PC-9 (cell line): ENCODE measurements at regions of chr3 and their contacts with region 1.

Region 1: GRCh38 chr3:195106418-195106906 is 164.5 kb downstream of the XXYLT1 start:
- DNase-seq: peak in 1 of 2 experiments; percentile 72
- H3K4me3 ChIP-seq: no peak overlapping the region; the same call in 1 of the 2 replicates
- H3K27ac ChIP-seq: no peak overlapping the region
- H3K4me1 ChIP-seq: peaks cover 40% of the 10 kb centered on the region
- H3K27me3 ChIP-seq: no peaks in the 10 kb centered on the region
- CTCF ChIP-seq: peak; percentile 100

Region 2: DNA sequence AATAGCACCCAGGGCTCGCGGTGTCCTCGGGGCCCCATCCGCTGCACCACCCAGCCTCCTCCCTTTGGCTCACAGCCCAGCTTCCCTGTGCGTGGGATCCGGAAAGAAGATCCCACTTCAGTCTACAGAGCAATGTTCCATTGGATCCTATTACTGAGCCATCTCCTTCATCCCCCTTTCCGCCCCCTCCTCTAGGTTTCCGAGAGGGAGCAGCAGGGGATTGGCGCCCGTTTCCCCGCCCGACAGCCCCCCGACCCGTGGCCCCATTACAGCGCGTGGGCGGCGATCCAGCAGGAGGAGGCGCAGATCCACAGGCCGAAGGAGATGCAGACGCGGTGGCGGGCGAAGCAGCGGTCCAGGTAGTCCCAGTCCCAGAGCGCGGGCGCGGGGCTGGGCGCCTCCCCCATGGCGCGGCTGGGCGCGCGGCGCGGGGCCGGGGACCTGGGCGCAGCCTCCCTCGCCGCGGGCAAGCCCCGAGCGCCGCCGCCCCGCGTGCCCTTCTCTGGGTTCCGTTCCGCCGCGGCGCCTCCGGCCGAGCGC is 473.6 kb before region 1 on chr3:
- CTCF ChIA-PET with region 1: no interaction called
- POLR2A ChIA-PET with region 1: no interaction called
- intact Hi-C with region 1: no loop called
- DNase-seq: no peak
- H3K4me3 ChIP-seq: peak overlapping the region; percentile 74
- H3K27ac ChIP-seq: no peak overlapping the region
- H3K4me1 ChIP-seq: no peaks in the 10 kb centered on the region
- H3K27me3 ChIP-seq: no peaks in the 10 kb centered on the region
- CTCF ChIP-seq: no peak

Region 3: DNA sequence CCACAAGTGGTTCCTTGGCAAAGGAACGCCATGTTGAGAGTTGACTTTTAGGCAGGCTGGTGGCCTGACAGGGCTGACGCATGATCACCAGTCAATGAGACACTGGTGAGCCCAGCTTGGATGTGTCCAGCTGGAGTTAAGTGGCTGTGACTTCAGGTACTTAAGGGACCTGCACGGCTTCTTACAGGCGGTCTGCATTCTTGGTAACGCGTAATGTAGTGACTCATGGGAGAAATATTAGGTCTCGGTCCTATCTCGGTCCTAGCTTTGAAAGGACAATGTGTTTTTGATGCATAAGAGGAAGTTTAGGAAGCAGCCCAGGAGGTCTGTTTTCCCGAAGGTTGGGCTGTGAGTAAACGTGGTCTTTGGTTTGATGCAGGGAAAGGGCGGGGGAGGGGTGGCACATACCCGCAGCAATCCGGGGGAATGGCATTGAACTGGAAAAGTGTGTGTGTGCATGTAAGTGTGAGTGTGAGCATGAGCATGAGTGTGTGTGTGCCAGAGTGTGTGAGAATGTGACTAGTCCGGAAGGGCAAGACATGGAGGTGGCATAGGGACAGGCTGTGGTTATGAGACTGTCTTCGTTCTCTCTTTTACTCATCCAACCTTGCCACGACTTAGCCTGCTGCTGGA is 365.5 kb before region 1 on chr3:
- CTCF ChIA-PET with region 1: no interaction called
- POLR2A ChIA-PET with region 1: no interaction called
- intact Hi-C with region 1: loop called (anchors 1 kb)
- DNase-seq: peak; percentile 86 to 100
- H3K4me3 ChIP-seq: peak overlapping the region; percentile 30; the same call in 1 of the 2 replicates
- H3K27ac ChIP-seq: peak overlapping the region; percentile 80
- H3K4me1 ChIP-seq: peaks cover 42% of the 10 kb centered on the region
- H3K27me3 ChIP-seq: no peaks in the 10 kb centered on the region
- CTCF ChIP-seq: no peak

Region 4: GRCh38 chr3:194908972-194909371 is 197.5 kb before region 1 on chr3:
- CTCF ChIA-PET with region 1: interaction called, 20 read pairs
- POLR2A ChIA-PET with region 1: no interaction called
- intact Hi-C with region 1: no loop called
- DNase-seq: no peak
- H3K4me3 ChIP-seq: no peak overlapping the region
- H3K27ac ChIP-seq: no peak overlapping the region
- H3K4me1 ChIP-seq: peaks cover 15% of the 10 kb centered on the region
- H3K27me3 ChIP-seq: peaks cover 4% of the 10 kb centered on the region; the same call in 1 of the 2 replicates
- CTCF ChIP-seq: no peak

Region 5: DNA sequence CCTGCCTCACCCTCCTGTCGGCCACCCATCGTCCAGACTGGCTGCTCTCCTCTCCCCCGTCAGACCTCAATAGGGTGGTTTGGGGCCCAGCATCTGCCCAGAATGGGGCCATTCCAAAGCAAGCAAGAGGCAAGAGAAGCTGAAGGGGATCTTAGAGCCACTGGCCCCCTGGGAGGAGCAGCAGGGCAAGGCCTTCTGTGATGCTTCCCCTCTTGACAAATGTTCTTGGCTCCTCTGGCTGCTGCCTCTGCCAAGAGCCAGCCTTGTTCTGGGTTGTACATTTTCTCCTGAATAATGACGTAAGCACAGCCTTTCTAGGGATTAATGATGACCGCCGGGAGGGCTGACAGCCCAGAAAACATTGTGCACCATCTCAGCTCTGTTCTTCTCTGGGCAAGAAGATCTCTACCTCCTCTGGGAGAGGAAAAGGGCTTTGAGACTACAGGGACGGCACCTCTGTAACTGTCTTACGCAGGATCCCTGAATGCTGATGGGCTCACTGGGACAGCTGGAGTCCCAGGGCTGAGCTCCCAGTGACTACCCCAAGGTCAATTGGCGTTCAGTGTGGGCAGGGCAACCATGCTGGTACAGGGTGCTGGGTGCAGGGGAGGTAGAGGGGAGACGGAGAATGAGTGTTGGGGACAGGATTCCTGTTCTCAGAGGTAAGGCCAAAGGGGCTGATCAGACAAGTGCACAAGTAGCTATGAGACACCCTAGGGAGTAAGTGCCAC is 167.5 kb before region 1 on chr3:
- CTCF ChIA-PET with region 1: interaction called, 10 read pairs
- POLR2A ChIA-PET with region 1: no interaction called
- intact Hi-C with region 1: loop called (anchors 10 kb)
- DNase-seq: no peak
- H3K4me3 ChIP-seq: no peak overlapping the region
- H3K27ac ChIP-seq: no peak overlapping the region
- H3K4me1 ChIP-seq: peaks cover 12% of the 10 kb centered on the region
- H3K27me3 ChIP-seq: no peaks in the 10 kb centered on the region
- CTCF ChIP-seq: no peak

Region 6: GRCh38 chr3:195001961-195002861 is 104.3 kb before region 1 on chr3:
- CTCF ChIA-PET with region 1: no interaction called
- POLR2A ChIA-PET with region 1: no interaction called
- intact Hi-C with region 1: loop called (anchors 1 kb)
- DNase-seq: peak; percentile 90 to 92
- H3K4me3 ChIP-seq: no peak overlapping the region
- H3K27ac ChIP-seq: no peak overlapping the region
- H3K4me1 ChIP-seq: peaks cover 25% of the 10 kb centered on the region
- H3K27me3 ChIP-seq: no peaks in the 10 kb centered on the region
- CTCF ChIP-seq: peak; percentile 85

Region 7: GRCh38 chr3:195259475-195260279 is 153.2 kb after region 1 on chr3:
- CTCF ChIA-PET with region 1: no interaction called
- POLR2A ChIA-PET with region 1: no interaction called
- intact Hi-C with region 1: loop called (anchors 1 kb)
- DNase-seq: peak; percentile 86 to 96
- H3K4me3 ChIP-seq: peak overlapping the region; percentile 70
- H3K27ac ChIP-seq: peak overlapping the region; percentile 74
- H3K4me1 ChIP-seq: peaks cover 13% of the 10 kb centered on the region
- H3K27me3 ChIP-seq: no peaks in the 10 kb centered on the region
- CTCF ChIP-seq: no peak